Vagina (tissue), 2 donors: ENCODE measurements at regions of chr2 and their contacts with region 1.

Region 1: GRCh38 chr2:26345545-26346453 is at the start of gene SELENOI:
- DNase-seq: peak; percentile 100
- H3K4me3 ChIP-seq: peak within 1 kb of the TSS; percentile 63 to 87
- H3K27ac ChIP-seq: peak within 1 kb of the TSS; percentile 90
- H3K4me1 ChIP-seq: peaks cover 21% of the 10 kb centered on the region
- H3K27me3 ChIP-seq: no peaks in the 10 kb centered on the region
- CTCF ChIP-seq: no peak
- POLR2A ChIP-seq: peak in 1 of 2 donors; percentile 92
- total RNA-seq, gene SELENOI: 33.4 TPM

Region 2: GRCh38 chr2:28342081-28342967 is 1996.5 kb after region 1 on chr2:
- intact Hi-C with region 1: loop called (anchors 10 kb)
- DNase-seq: peak in 1 of 2 donors; percentile 98
- H3K4me3 ChIP-seq: no peak overlapping the region
- H3K27ac ChIP-seq: peak overlapping the region; percentile 82
- H3K4me1 ChIP-seq: peaks cover 98% of the 10 kb centered on the region
- H3K27me3 ChIP-seq: no peaks in the 10 kb centered on the region
- CTCF ChIP-seq: no peak
- POLR2A ChIP-seq: peak in 1 of 2 donors; percentile 18